ENCODE measurements at regions of chr13 and their contacts with region 1.

Region 1: DNA sequence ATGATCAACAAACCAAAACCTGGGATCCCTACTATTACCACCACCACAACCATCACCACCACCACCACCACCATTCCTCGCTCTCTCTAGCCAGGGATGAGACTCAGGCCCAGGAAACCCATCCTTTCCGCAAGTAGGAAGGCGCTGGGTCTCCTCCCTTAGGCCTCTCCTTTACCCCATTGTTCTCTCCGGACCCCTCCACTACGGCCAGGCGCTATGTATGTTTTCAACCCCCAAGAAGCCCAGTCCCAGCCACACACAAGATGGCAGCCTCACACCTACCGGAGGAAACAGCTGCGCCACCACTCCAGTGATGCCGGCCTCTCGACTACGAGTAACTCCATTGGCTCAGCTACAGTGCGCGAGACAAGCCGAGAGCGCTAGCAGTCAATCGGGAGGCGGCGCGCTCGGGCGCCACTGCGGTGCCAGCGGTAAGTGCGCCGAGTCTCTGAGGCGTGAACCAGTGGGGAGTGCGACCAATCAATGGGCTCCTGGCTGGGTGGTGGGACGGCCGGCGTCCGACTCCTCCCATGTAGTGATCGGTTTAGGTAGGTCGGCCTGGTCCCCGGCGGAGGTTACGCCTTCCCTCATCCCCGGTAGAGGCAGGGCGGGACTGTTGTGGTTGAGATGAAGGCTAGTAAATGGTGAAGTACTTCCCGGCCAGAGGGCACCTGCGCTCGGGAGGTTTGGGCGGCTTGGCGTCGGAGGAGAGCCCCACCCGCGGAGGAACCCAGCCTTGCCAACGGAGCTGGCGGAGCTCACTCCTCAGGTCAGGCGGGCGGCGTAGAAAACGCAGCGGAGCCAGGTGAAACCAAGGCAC is at the starts of genes CAB39L and SETDB2:
- DNase-seq: peak; percentile 100
- H3K4me3 Mint-ChIP-seq: peak within 1 kb of the TSS; percentile 85
- H3K27ac Mint-ChIP-seq: peak within 1 kb of the TSS; percentile 94
- H3K4me1 Mint-ChIP-seq: peaks cover 62% of the 10 kb centered on the region
- H3K27me3 Mint-ChIP-seq: no peaks in the 10 kb centered on the region
- total RNA-seq, gene CAB39L: 5.6 to 6.3 TPM
- total RNA-seq, gene SETDB2: 13.9 to 15.9 TPM

Region 2: DNA sequence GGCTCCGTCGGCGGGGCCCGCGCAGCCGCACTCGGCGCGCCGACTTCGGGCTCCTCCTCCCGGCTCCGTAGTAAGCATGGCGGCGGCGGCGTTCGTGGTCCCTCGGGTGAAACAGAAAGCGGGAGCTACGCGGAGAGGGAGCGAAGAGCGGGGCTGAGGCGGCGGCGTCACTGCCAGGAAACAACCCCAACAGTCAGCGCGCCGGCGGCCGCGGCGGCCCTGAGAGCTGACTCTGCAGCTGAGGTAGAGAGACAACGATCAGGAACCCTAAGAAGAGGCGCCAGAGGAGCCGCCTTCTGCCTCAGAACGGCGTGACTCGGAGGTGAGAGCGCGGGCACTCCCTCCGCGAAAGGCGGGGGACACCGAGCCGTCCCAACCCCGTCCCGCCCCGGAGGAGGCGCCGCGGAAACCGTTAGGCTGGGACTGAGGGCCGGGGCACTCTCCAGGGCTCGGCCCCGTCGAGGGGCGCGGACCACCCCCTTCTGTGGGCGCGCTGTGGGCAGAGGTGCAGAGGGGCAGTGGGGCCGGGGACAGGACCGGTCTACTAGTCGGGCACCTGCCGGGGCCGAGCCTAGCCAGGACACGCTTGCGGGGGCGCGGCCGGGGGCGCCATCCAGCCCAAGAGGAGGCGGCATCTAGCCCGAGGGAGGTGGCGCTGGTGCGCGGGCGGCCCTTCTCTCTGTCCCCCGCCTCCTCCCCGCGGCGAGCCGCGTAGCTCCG is 467.9 kb before region 1 on chr13 and contains the start of gene FNDC3A:
- CTCF ChIA-PET with region 1: no interaction called
- POLR2A ChIA-PET with region 1: no interaction called
- intact Hi-C with region 1: loop called (anchors 2 kb)
- DNase-seq: peak; percentile 91
- H3K4me3 Mint-ChIP-seq: peak within 1 kb of the TSS; percentile 93
- H3K27ac Mint-ChIP-seq: peak within 1 kb of the TSS; percentile 98
- H3K4me1 Mint-ChIP-seq: peaks cover 43% of the 10 kb centered on the region
- H3K27me3 Mint-ChIP-seq: no peaks in the 10 kb centered on the region
- total RNA-seq, gene FNDC3A: 21.1 to 21.6 TPM

Region 3: GRCh38 chr13:49300739-49301589 is 142.9 kb before region 1 on chr13:
- CTCF ChIA-PET with region 1: no interaction called
- POLR2A ChIA-PET with region 1: no interaction called
- intact Hi-C with region 1: loop called (anchors 1 kb)
- DNase-seq: peak; percentile 75
- H3K4me3 Mint-ChIP-seq: peak overlapping the region; percentile 33
- H3K27ac Mint-ChIP-seq: no peak overlapping the region
- H3K4me1 Mint-ChIP-seq: peaks cover 9% of the 10 kb centered on the region
- H3K27me3 Mint-ChIP-seq: no peaks in the 10 kb centered on the region

Region 4: DNA sequence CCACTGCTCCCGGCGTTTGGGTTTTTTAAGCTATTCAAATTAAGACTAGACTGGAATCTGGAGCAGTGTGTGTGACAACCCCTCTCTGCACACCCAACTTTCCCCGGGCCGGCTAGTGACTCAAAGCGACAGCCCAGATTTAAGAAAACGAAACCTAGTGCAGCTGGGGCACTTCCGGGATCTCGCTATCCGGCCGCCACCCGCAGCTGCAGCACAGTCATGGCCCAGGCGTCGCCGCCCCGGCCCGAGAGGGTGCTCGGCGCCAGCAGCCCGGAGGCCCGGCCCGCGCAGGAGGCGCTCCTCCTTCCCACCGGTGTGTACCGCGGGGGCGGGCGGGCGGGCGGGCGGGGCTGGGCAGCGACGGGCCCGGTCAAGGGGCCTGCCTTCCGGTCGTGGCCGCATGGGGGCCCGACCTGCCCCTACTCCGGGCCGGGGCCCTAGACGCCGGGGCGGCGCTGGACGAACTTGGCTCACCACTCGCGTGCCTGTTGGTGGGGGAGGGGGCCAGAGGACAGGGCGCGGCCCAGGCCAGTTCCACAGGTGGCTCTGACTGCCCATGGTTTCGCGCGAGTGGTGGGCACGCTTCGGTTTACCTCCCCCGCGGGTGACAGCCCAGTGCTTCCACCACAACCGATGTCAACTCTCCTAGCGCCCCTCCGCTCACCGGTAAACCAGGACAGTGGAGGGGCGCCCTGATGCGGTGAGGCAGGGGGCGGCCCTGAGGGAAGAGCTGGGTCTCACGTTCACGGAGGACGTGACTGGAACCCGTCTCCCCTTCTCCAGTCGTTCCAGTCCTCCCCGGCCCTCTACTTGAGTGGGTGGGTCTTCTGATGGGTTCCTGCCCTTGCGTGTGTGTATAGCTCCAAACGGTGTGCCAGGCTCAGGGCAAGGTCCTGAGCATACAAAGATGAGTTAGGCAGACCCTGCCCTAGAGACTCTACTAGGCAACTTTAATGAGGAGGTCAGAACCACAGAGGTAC is 52.2 kb after region 1 on chr13 and contains the start of gene PHF11:
- CTCF ChIA-PET with region 1: interaction called, 4 read pairs
- POLR2A ChIA-PET with region 1: interaction called, 72 read pairs
- intact Hi-C with region 1: loop called (anchors 1 kb)
- DNase-seq: peak; percentile 95
- H3K4me3 Mint-ChIP-seq: peak within 1 kb of the TSS; percentile 91
- H3K27ac Mint-ChIP-seq: peak within 1 kb of the TSS; percentile 98
- H3K4me1 Mint-ChIP-seq: peaks cover 52% of the 10 kb centered on the region
- H3K27me3 Mint-ChIP-seq: no peaks in the 10 kb centered on the region
- total RNA-seq, gene PHF11: 89.2 to 99.4 TPM

Region 5: GRCh38 chr13:49606747-49607648 is 163.1 kb after region 1 on chr13:
- CTCF ChIA-PET with region 1: interaction called, 7 read pairs
- POLR2A ChIA-PET with region 1: no interaction called
- intact Hi-C with region 1: loop called (anchors 1 kb)
- DNase-seq: peak; percentile 89
- H3K4me3 Mint-ChIP-seq: peak overlapping the region; percentile 74
- H3K27ac Mint-ChIP-seq: no peak overlapping the region
- H3K4me1 Mint-ChIP-seq: peaks cover 2% of the 10 kb centered on the region
- H3K27me3 Mint-ChIP-seq: no peaks in the 10 kb centered on the region

Region 6: GRCh38 chr13:49792550-49793324 is 348.8 kb after region 1 on chr13 and contains the start of gene KPNA3:
- CTCF ChIA-PET with region 1: no interaction called
- POLR2A ChIA-PET with region 1: no interaction called
- intact Hi-C with region 1: loop called (anchors 2 kb)
- DNase-seq: peak; percentile 96
- H3K4me3 Mint-ChIP-seq: peak within 1 kb of the TSS; percentile 91
- H3K27ac Mint-ChIP-seq: peak within 1 kb of the TSS; percentile 93
- H3K4me1 Mint-ChIP-seq: peaks cover 27% of the 10 kb centered on the region
- H3K27me3 Mint-ChIP-seq: no peaks in the 10 kb centered on the region
- total RNA-seq, gene KPNA3: 42.0 to 44.0 TPM